GM13977 (cell line): ENCODE measurements at regions of chr1 and their contacts with region 1.

Region 1: GRCh38 chr1:218345673-218346390 is 696 bp downstream of the TGFB2 start:
- DNase-seq: peak; percentile 50
- CTCF ChIP-seq: no peak

Region 2: GRCh38 chr1:217253985-217254384 is 1091.8 kb before region 1 on chr1:
- in situ Hi-C with region 1: no loop called
- DNase-seq: no peak
- CTCF ChIP-seq: no peak

Region 3: GRCh38 chr1:218459878-218460711 is 114.3 kb after region 1 on chr1:
- in situ Hi-C with region 1: no loop called
- DNase-seq: no peak
- CTCF ChIP-seq: no peak

Region 4: DNA sequence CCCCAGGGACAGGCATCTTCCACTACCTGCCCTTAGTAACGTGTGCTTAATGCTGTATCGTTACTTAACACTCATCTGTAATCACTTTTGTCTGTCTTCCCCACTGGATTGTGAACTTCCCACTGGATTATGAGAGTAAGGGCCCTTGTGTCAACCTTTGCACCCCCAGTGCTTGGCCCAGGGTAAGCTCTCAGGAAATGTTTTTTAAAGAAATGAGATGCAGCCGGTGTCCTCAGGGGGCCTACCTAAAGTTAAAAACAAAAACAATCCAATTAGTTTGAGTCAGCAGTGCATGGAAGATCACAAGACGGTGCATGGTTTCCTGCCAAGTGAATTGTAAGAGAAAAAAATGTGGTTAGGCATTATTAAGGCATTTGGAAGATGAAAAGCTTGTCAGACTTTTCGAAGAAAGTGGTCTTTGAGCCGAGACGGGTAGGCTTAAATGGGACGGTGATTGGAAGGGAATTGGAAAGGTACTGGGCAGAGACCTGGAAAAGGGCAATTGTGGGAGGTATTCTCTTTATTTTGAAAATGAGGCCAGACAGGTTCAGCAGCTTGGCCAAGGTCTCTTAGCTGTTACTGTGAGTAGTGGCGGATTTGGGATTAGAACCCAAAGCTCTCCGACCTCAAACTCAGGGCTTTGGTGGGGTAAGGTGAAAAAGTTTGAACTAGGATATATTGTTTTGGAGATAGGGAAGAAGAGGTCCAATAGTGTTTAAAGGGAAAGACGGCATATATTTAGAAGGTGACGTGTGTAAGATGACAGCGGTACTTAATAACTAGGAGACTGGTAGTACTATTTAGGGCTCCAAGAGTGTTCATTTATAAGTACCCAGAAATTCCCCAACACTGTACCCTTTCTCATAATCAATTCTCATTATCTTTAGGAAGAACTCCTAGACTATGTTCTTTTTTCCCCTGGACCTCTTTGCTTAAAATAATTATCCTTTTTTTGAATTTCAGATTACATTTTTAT is 829.0 kb after region 1 on chr1:
- in situ Hi-C with region 1: loop called (anchors 25 kb)
- DNase-seq: peak; percentile 11
- CTCF ChIP-seq: no peak

Region 5: GRCh38 chr1:219566951-219567947 is 1221.4 kb after region 1 on chr1:
- in situ Hi-C with region 1: loop called (anchors 25 kb)
- DNase-seq: no peak
- CTCF ChIP-seq: peak; percentile 67